ENCODE measurements at regions of chr20 and their contacts with region 1.

Region 1: GRCh38 chr20:20743511-20744169 is 31.2 kb upstream of the RALGAPA2 start:
- DNase-seq: peak; percentile 97
- H3K4me3 ChIP-seq: peak overlapping the region; percentile 6
- H3K27ac ChIP-seq: peak overlapping the region; percentile 97
- H3K4me1 ChIP-seq: peaks cover 62% of the 10 kb centered on the region
- H3K27me3 ChIP-seq: no peaks in the 10 kb centered on the region
- CTCF ChIP-seq: no peak

Region 2: GRCh38 chr20:20295621-20296498 is 447.8 kb before region 1 on chr20:
- CTCF ChIA-PET with region 1: no interaction called
- POLR2A ChIA-PET with region 1: no interaction called
- intact Hi-C with region 1: no loop called
- DNase-seq: no peak
- H3K4me3 ChIP-seq: no peak overlapping the region
- H3K27ac ChIP-seq: no peak overlapping the region
- H3K4me1 ChIP-seq: no peaks in the 10 kb centered on the region
- H3K27me3 ChIP-seq: peaks cover 13% of the 10 kb centered on the region
- CTCF ChIP-seq: no peak

Region 3: DNA sequence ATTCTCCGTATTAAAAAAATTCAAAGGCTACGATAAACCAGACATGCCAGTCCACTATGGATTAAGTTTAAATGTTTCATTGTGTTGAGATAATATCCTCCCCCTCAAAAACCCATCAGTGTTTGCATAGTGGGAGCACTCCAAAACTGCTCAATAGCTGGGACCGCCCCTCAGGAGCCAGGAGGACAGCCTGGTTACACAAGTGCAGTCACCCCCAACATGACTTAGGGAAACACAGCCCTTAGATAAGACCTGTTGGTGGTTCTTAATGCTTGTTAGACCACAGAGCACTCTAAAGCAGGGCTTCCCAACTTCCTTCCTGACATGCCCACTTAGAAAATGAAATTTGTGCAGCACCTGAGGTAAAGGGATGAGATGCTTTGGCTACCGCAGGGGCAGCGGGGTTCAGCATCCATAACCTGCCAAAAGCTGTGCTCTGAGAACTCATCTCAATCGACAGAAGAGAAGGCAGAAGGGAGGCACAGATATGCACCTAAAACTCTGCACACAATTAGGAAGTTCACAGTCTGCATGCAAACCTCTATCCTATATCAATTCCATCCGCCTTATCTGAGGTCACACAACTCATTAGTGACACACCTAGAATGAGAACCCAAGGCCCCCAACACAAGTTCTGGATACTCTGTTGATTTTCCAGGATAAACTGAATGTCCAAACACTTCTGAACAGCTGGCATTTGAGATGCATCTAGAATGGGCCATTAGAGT is 105.5 kb before region 1 on chr20:
- CTCF ChIA-PET with region 1: no interaction called
- POLR2A ChIA-PET with region 1: no interaction called
- intact Hi-C with region 1: no loop called
- DNase-seq: no peak
- H3K4me3 ChIP-seq: no peak overlapping the region
- H3K27ac ChIP-seq: no peak overlapping the region
- H3K4me1 ChIP-seq: no peaks in the 10 kb centered on the region
- H3K27me3 ChIP-seq: no peaks in the 10 kb centered on the region
- CTCF ChIP-seq: no peak

Region 4: DNA sequence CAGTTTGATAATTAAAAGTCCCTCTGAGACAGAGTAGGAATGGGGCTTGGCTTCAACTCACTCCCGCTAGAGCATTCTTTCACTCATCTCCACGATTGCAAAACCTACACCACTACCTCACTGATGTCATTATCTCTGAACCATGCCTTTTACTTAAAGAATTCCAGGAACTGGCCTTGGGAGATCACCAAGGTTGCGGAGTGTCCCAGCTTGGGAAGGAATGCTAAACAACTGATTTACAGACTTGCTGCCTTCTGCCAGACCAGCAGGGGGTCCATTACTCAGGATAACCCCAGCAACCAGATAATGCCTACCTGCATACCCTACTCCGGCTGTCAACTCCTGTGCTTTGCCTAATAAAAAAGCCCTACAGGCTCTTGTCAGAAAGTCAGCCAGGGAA is 71.0 kb after region 1 on chr20:
- CTCF ChIA-PET with region 1: no interaction called
- POLR2A ChIA-PET with region 1: interaction called, 3 read pairs
- intact Hi-C with region 1: loop called (anchors 5 kb)
- DNase-seq: no peak
- H3K4me3 ChIP-seq: no peak overlapping the region
- H3K27ac ChIP-seq: no peak overlapping the region
- H3K4me1 ChIP-seq: peaks cover 21% of the 10 kb centered on the region
- H3K27me3 ChIP-seq: no peaks in the 10 kb centered on the region
- CTCF ChIP-seq: no peak